B cell (primary cell): ENCODE measurements at regions of chr16 and their contacts with region 1.

Region 1: DNA sequence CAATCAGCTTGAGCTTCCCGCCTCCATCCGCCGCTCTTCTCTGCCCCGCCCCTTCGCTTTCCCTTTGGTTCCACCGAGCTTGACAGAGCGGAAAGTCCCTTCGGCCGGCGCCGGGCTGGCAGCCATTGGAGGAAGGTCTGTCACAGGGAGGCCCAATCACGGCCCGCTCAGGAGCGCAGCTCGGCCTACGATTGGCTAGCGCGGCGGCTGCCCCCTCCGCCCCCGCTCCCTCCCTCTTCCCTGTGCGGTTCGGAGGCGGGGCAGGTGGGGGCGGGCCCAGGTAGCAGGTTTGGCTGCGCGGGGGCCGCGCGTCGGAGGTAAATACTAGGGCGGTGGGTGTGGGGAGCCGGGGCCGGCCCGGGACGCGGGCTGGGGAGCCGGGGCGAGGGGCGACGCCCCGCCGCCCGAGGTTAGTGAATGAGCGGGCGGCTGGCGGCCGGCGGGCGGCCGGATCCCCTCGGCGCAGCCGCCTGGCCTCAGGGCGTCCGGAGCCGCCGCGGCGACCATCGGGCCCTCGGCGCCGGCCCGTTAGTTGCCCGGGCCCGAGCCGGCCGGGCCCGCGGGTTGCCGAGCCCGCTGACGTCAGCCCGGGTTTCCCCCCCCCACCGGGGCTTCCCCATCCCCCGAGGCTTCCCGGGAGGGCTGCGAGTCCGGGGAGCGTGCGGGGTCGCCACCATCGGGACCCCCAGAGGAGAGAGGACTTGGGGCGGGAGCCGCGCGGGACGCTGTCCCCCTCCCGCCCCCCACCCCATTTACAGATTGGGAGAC is at the start of gene CYLD:
- DNase-seq: peak; percentile 100
- ATAC-seq: peak; percentile 86
- H3K4me3 ChIP-seq: peak within 1 kb of the TSS; percentile 75 to 96 (median 85)
- H3K4me3 Mint-ChIP-seq: peak within 1 kb of the TSS; percentile 91
- H3K27ac ChIP-seq: peak within 1 kb of the TSS; percentile 100
- H3K27ac Mint-ChIP-seq: peak within 1 kb of the TSS; percentile 97
- H3K4me1 ChIP-seq: peaks cover 34% of the 10 kb centered on the region in 2 donors
- H3K4me1 Mint-ChIP-seq: peaks cover 49% of the 10 kb centered on the region
- H3K27me3 ChIP-seq: no peaks in the 10 kb centered on the region
- H3K27me3 Mint-ChIP-seq: no peaks in the 10 kb centered on the region
- CTCF ChIP-seq: no peak
- total RNA-seq, gene CYLD: 160 and 166 TPM in 2 replicates

Region 2: DNA sequence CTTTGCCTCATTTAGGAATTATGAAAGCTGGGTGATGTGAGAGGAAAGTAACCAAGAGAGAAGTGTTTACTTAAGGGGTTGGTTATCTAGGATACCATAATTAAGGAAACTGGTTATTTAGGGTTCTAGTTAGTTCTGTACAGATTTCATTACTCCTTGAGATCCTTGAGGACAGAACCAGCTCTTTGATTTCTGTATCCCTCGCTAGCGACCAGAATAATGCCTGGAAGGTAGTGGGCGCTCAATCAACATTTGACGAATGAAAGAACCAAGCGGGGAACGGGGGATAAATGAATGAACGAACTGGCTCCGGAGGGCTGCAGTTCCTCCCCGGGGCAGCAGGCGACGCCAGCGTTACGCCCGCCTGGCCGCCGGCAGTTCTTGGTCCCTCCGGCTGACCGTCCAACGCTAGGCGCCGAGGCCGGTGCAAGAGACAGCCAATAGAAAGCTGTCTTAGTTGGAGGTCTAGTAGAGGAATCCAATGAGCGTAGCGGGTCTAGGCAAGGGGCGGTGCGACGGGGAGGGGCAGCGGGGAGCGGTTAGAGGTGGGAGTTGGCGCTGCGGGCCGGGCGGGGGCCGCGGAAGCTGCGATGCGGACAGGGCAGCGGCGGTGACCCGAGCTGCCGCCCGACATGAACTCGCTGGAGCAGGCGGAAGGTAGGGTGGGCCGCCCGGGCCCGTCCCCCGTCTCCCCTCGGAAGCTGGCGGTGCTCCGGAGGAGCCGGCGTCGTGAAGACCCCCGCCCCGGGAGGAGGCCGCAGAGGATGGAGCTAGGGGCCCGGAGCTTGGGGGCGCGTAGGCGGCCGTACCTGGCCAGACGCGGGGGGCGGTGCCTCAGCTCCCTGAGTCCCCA is 717.1 kb before region 1 on chr16 and contains the start of gene CNEP1R1:
- CTCF ChIA-PET with region 1: interaction called, 6 read pairs
- POLR2A ChIA-PET with region 1: interaction called, 3 read pairs
- intact Hi-C with region 1: loop called (anchors 5 kb)
- DNase-seq: peak; percentile 98
- ATAC-seq: peak; percentile 94
- H3K4me3 ChIP-seq: peak within 1 kb of the TSS; percentile 87 to 93 (median 92)
- H3K4me3 Mint-ChIP-seq: peak within 1 kb of the TSS; percentile 93
- H3K27ac ChIP-seq: peak within 1 kb of the TSS; percentile 31 to 78
- H3K27ac Mint-ChIP-seq: peak within 1 kb of the TSS; percentile 89
- H3K4me1 ChIP-seq: peaks cover 12 to 14% of the 10 kb centered on the region in 2 donors
- H3K4me1 Mint-ChIP-seq: peaks cover 23% of the 10 kb centered on the region
- H3K27me3 ChIP-seq: no peaks in the 10 kb centered on the region
- H3K27me3 Mint-ChIP-seq: peaks cover 7% of the 10 kb centered on the region
- CTCF ChIP-seq: peak; percentile 100
- total RNA-seq, gene CNEP1R1: 32.9 and 36.9 TPM in 2 replicates

Region 3: GRCh38 chr16:50065624-50066481 is 676.1 kb before region 1 on chr16 and contains the start of gene HEATR3:
- CTCF ChIA-PET with region 1: no interaction called
- POLR2A ChIA-PET with region 1: no interaction called
- intact Hi-C with region 1: loop called (anchors 5 kb)
- DNase-seq: peak; percentile 95
- ATAC-seq: peak; percentile 86
- H3K4me3 ChIP-seq: peak within 1 kb of the TSS; percentile 39 to 82 (median 75)
- H3K4me3 Mint-ChIP-seq: peak within 1 kb of the TSS; percentile 89
- H3K27ac ChIP-seq: peak within 1 kb of the TSS; percentile 47 to 63
- H3K27ac Mint-ChIP-seq: peak within 1 kb of the TSS; percentile 92
- H3K4me1 ChIP-seq: peaks cover 17 to 20% of the 10 kb centered on the region in 2 donors
- H3K4me1 Mint-ChIP-seq: peaks cover 35% of the 10 kb centered on the region
- H3K27me3 ChIP-seq: no peaks in the 10 kb centered on the region
- H3K27me3 Mint-ChIP-seq: no peaks in the 10 kb centered on the region
- CTCF ChIP-seq: no peak
- total RNA-seq, gene HEATR3: 21.0 and 21.2 TPM in 2 replicates

Region 4: DNA sequence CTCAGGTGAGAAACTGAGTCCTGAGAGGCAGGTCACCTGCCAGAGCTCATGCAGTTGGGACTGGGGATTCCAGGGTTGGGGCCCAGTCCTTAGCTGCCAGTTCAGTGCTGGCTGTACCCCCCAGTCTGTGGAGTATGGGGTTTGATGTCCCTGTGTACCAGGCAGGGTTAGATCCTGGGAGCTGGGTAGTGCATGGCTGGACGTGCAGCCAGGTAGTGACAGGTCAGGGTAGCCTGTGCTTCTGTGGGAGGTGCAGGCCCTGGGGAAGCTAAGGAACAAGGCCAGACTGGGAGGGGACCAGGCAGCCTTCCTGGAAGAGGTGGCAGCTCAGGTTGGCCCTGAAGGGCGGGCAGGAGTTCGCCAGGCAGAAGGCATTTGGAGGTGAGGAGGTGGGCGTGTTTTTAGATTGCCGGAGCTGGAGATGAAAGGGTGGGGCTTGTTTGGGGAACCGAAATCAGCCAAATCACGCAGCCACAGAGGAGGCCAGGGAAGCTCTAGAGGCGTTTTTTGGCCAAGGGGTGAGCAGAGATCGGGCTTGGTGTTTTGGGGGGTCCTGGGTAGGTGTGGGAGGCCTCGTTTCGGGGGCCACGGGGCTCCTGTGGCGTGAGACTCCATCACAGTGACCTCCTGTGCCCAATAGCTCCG is 468.2 kb before region 1 on chr16:
- CTCF ChIA-PET with region 1: no interaction called
- POLR2A ChIA-PET with region 1: interaction called, 4 read pairs
- intact Hi-C with region 1: loop called (anchors 1 kb)
- DNase-seq: peak; percentile 88
- ATAC-seq: peak; percentile 81
- H3K4me3 ChIP-seq: peak overlapping the region; percentile 12 to 84 (median 80)
- H3K4me3 Mint-ChIP-seq: peak overlapping the region; percentile 98
- H3K27ac ChIP-seq: peak overlapping the region; percentile 93 to 97
- H3K27ac Mint-ChIP-seq: peak overlapping the region; percentile 100
- H3K4me1 ChIP-seq: peaks cover 63 to 74% of the 10 kb centered on the region in 2 donors
- H3K4me1 Mint-ChIP-seq: peaks cover 75% of the 10 kb centered on the region
- H3K27me3 ChIP-seq: no peaks in the 10 kb centered on the region
- H3K27me3 Mint-ChIP-seq: no peaks in the 10 kb centered on the region
- CTCF ChIP-seq: no peak

Region 5: GRCh38 chr16:50593410-50594150 is 148.4 kb before region 1 on chr16:
- CTCF ChIA-PET with region 1: interaction called, 3 read pairs
- POLR2A ChIA-PET with region 1: no interaction called
- intact Hi-C with region 1: loop called (anchors 1 kb)
- DNase-seq: no peak
- ATAC-seq: no peak
- H3K4me3 ChIP-seq: no peak overlapping the region
- H3K4me3 Mint-ChIP-seq: no peak overlapping the region
- H3K27ac ChIP-seq: no peak overlapping the region
- H3K27ac Mint-ChIP-seq: no peak overlapping the region
- H3K4me1 ChIP-seq: peaks cover 11 to 16% of the 10 kb centered on the region in 2 donors
- H3K4me1 Mint-ChIP-seq: peaks cover 14% of the 10 kb centered on the region
- H3K27me3 ChIP-seq: no peaks in the 10 kb centered on the region
- H3K27me3 Mint-ChIP-seq: no peaks in the 10 kb centered on the region
- CTCF ChIP-seq: no peak

Region 6: GRCh38 chr16:50696575-50697420 is 45.2 kb before region 1 on chr16:
- CTCF ChIA-PET with region 1: interaction called, 3 read pairs
- POLR2A ChIA-PET with region 1: interaction called, 5 read pairs
- intact Hi-C with region 1: loop called (anchors 1 kb)
- DNase-seq: no peak
- ATAC-seq: no peak
- H3K4me3 ChIP-seq: no peak overlapping the region
- H3K4me3 Mint-ChIP-seq: peak overlapping the region; percentile 29
- H3K27ac ChIP-seq: peak overlapping the region in 1 of 2 donors; percentile 39
- H3K27ac Mint-ChIP-seq: peak overlapping the region; percentile 85
- H3K4me1 ChIP-seq: peaks cover 43 to 44% of the 10 kb centered on the region in 2 donors
- H3K4me1 Mint-ChIP-seq: peaks cover 63% of the 10 kb centered on the region
- H3K27me3 ChIP-seq: no peaks in the 10 kb centered on the region
- H3K27me3 Mint-ChIP-seq: no peaks in the 10 kb centered on the region
- CTCF ChIP-seq: no peak

Region 7: GRCh38 chr16:50763211-50763610 is 21.2 kb after region 1 on chr16:
- CTCF ChIA-PET with region 1: no interaction called
- POLR2A ChIA-PET with region 1: no interaction called
- intact Hi-C with region 1: no loop called
- DNase-seq: no peak
- ATAC-seq: no peak
- H3K4me3 ChIP-seq: no peak overlapping the region
- H3K4me3 Mint-ChIP-seq: no peak overlapping the region
- H3K27ac ChIP-seq: no peak overlapping the region
- H3K27ac Mint-ChIP-seq: no peak overlapping the region
- H3K4me1 ChIP-seq: no peaks in the 10 kb centered on the region
- H3K4me1 Mint-ChIP-seq: peaks cover 41% of the 10 kb centered on the region
- H3K27me3 ChIP-seq: no peaks in the 10 kb centered on the region
- H3K27me3 Mint-ChIP-seq: no peaks in the 10 kb centered on the region
- CTCF ChIP-seq: no peak

Region 8: DNA sequence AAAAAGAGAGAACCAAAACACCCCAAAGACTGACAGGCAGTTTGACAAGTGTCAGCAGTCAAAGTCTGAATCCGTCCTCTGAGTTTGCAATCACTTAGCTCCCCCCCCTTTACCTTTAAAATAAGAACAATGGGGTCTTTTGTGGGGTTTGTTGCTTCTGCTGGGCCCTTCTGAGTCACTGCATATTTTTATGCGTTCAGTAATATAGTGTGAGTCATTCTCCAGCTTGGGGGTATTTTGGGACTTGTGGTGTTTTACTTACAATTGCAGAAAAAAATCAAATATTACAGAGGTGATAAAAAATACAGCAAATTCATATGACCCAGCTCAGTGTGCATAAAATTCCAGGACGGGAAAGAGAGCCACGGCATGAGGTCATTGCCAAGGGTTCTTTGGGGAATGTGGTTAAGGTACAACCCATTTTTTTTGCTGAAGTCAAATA is 120.0 kb after region 1 on chr16:
- CTCF ChIA-PET with region 1: no interaction called
- POLR2A ChIA-PET with region 1: no interaction called
- intact Hi-C with region 1: no loop called
- DNase-seq: no peak
- ATAC-seq: no peak
- H3K4me3 ChIP-seq: no peak overlapping the region
- H3K4me3 Mint-ChIP-seq: no peak overlapping the region
- H3K27ac ChIP-seq: no peak overlapping the region
- H3K27ac Mint-ChIP-seq: no peak overlapping the region
- H3K4me1 ChIP-seq: no peaks in the 10 kb centered on the region
- H3K4me1 Mint-ChIP-seq: no peaks in the 10 kb centered on the region
- H3K27me3 ChIP-seq: no peaks in the 10 kb centered on the region
- H3K27me3 Mint-ChIP-seq: peaks cover 2% of the 10 kb centered on the region
- CTCF ChIP-seq: no peak

Region 9: DNA sequence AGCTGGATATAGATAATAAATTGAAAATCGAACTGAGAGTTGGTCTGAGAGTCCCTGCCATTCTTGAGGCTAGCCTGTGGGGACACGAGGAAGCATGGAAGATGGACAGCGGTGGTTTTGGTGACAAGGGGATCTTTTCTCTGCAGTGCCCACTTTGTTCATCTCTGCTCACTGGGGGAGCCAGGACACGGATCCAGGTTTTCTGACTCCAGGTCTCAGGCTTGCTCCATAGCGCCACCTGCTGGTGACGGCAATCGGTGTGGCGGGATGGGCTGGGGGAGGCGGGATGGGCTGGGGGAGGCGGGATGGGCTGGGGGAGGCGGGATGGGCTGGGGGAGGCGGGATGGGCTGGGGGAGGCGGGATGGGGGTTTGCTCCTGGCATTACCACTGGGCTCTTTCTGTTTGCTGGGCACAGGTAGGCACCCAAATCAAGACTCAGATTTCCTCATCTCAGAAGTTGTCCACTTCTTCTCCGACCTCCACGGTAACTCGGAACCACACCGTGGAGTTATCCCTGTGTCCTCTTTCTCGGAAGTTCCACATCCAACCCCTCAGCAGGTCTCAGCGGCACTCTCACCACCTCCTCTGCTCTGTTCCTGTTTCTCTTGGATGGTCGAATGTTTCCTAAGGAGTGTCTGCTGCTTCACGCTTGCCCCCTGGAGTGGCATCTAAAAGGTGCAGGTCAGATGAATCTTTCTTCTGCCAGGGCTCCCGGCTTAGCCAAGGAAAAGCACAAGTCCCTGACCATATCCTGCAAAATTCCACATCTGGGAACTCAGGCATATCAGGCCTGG is 142.3 kb after region 1 on chr16:
- CTCF ChIA-PET with region 1: no interaction called
- POLR2A ChIA-PET with region 1: no interaction called
- intact Hi-C with region 1: no loop called
- DNase-seq: no peak
- ATAC-seq: no peak
- H3K4me3 ChIP-seq: no peak overlapping the region
- H3K4me3 Mint-ChIP-seq: no peak overlapping the region
- H3K27ac ChIP-seq: no peak overlapping the region
- H3K27ac Mint-ChIP-seq: no peak overlapping the region
- H3K4me1 ChIP-seq: no peaks in the 10 kb centered on the region
- H3K4me1 Mint-ChIP-seq: no peaks in the 10 kb centered on the region
- H3K27me3 ChIP-seq: peaks cover 0 to 9% (median 0%) of the 10 kb centered on the region in 4 experiments
- H3K27me3 Mint-ChIP-seq: peaks cover 17% of the 10 kb centered on the region
- CTCF ChIP-seq: peak; percentile 11